GM10248 (cell line): ENCODE measurements at regions of chr14 and their contacts with region 1.

Region 1: GRCh38 chr14:93033983-93034670 is 81.6 kb downstream of the ITPK1 start:
- DNase-seq: peak; percentile 88
- CTCF ChIP-seq: peak; percentile 83

Region 2: GRCh38 chr14:92986254-92987147 is 47.6 kb before region 1 on chr14:
- CTCF ChIA-PET with region 1: no interaction called
- POLR2A ChIA-PET with region 1: no interaction called
- DNase-seq: no peak
- CTCF ChIP-seq: no peak

Region 3: DNA sequence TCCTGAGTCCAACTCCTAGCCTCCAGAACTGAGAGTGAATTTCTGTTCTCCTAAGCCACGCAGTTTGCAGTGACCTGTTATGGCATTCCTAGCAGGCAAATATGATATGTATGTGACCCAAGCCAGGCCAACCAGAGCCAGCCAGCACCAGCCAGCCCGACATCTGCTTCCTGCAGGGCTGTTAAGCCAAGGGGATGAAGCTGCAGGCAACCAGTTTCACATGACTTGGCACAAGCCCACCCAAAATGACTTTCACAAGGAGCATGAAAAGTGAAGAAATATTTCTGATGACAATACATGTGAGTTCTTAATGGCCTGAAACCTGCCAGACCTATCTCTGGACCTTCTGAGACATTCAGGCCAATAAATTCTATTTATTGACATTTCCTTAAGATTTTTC is 13.5 kb after region 1 on chr14:
- CTCF ChIA-PET with region 1: interaction called, 11 read pairs
- POLR2A ChIA-PET with region 1: no interaction called
- DNase-seq: no peak
- CTCF ChIP-seq: no peak

Region 4: GRCh38 chr14:93059917-93060545 is 25.9 kb after region 1 on chr14:
- CTCF ChIA-PET with region 1: interaction called, 18 read pairs
- POLR2A ChIA-PET with region 1: no interaction called
- DNase-seq: no peak
- CTCF ChIP-seq: no peak